A673 (cell line): ENCODE measurements at regions of chr3 and their contacts with region 1.

Region 1: GRCh38 chr3:180601688-180602666 is at the start of gene TTC14:
- DNase-seq: peak; percentile 96
- H3K4me3 ChIP-seq: peak within 1 kb of the TSS; percentile 83
- H3K27ac ChIP-seq: peak within 1 kb of the TSS; percentile 74
- H3K4me1 ChIP-seq: no peaks in the 10 kb centered on the region
- H3K27me3 ChIP-seq: no peaks in the 10 kb centered on the region
- CTCF ChIP-seq: peak; percentile 20; the same call in 1 of the 2 replicates
- total RNA-seq, gene TTC14: 30.0 and 38.2 TPM in 2 replicates

Region 2: DNA sequence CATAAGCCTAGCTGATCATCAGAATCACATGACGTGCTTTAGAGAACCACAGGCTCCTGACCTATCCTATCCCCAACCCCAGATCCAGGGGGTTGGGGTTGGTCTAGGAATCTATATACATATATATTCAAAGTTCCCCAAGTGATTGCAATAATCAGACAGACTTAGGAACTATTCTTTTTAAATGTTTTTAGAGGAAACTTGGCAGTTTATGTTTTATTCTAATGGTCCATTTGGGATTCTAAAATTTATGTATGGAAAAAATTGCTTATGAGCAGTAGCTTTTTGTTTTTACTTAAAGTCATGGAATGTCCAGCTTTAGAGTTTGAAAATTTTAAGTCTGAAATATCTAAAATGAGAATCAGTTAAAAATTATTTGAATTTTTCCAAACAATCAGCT is 1232.4 kb before region 1 on chr3:
- CTCF ChIA-PET with region 1: no interaction called
- POLR2A ChIA-PET with region 1: no interaction called
- intact Hi-C with region 1: no loop called
- DNase-seq: no peak
- H3K4me3 ChIP-seq: no peak overlapping the region
- H3K27ac ChIP-seq: no peak overlapping the region
- H3K4me1 ChIP-seq: no peaks in the 10 kb centered on the region
- H3K27me3 ChIP-seq: no peaks in the 10 kb centered on the region
- CTCF ChIP-seq: no peak

Region 3: DNA sequence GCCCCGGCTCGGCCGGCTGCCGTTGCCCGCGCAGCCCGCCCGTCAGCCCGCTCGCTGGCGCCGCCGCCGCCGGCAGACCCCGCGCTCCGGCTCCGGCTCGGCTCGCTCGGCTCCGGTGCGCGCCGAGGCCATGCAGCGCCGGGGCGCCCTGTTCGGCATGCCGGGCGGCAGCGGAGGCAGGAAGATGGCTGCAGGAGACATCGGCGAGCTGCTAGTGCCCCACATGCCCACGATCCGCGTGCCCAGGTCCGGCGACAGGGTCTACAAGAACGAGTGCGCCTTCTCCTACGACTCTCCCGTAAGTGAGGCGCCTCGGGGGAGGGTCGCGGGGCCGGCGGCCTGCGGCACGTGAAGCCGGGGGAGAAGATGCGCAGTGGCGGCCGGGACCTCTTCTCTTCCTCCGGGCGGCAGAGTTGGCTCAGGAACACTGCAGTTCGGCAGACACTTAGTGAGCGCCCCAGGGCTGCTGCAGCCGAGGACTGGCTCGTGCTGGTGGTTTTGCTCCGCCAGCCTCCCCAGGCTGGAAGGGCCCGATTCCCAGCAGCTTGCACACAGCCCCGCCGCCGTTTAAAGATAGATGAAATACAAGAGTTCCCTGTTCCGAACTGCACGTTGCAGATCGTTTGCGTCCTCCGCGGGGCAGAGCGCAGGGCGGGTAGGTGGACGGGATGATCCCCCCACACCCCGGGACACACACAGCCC is 948.7 kb before region 1 on chr3:
- CTCF ChIA-PET with region 1: no interaction called
- POLR2A ChIA-PET with region 1: no interaction called
- intact Hi-C with region 1: loop called (anchors 5 kb)
- DNase-seq: peak; percentile 89
- H3K4me3 ChIP-seq: peak overlapping the region; percentile 94
- H3K27ac ChIP-seq: peak overlapping the region; percentile 92
- H3K4me1 ChIP-seq: peaks cover 19% of the 10 kb centered on the region
- H3K27me3 ChIP-seq: no peaks in the 10 kb centered on the region
- CTCF ChIP-seq: peak; percentile 39

Region 4: DNA sequence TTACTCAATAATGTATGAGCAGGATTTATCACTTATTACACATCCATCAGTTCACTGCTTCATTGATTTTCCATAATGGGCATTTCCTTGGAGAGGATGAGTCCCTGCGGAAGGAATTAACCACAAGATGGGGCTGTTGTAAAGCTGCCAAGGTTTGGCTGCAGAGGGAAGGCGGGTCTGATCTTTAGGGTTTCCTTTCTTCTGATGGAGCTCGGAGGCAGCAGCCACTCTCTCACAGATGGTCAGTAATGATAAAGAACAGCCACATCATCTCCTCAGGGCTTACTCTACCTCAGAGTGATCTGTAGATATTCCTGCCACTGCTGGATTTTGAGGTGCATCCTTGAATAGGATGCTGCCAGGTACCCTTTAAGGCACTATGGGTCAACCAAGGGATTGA is 833.9 kb before region 1 on chr3:
- CTCF ChIA-PET with region 1: no interaction called
- POLR2A ChIA-PET with region 1: no interaction called
- intact Hi-C with region 1: loop called (anchors 5 kb)
- DNase-seq: peak; percentile 94
- H3K4me3 ChIP-seq: no peak overlapping the region
- H3K27ac ChIP-seq: peak overlapping the region; percentile 70
- H3K4me1 ChIP-seq: peaks cover 84% of the 10 kb centered on the region
- H3K27me3 ChIP-seq: no peaks in the 10 kb centered on the region
- CTCF ChIP-seq: peak; percentile 81